CD4-positive, alpha-beta memory T cell (primary cell): ENCODE measurements at regions of chr20 and their contacts with region 1.

Region 1: DNA sequence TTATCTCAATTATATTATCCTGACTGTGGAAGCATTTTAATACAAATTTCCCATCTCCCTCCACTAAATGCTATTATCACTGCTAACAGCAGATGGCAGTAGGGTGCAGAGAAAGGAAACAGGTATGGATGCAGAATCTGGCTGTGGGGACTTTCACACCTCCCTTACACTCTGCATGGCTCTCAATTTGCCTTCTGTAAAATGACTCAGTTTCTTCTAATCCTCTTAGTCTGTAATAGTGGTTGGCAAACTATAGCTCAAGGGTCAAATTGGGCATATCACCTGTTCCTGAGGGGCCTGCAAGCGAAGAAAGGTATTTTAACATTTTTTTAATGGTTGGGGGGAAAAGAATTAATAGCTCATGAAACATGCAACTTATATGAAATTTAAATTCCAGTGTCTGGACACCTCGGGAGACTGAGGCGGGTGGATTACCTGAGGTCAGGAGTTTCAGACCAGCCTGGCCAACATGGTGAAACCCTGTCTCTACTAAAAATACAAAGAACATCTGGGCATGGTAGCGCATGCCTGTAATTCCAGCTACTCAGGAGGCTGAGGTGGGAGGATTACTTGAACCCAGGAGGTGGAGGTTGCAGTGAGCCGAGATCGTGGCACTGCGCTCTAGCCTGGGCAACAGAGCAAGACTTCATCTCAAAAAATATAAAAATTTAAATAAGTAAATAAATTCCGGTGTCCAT is 83.5 kb downstream of the ZMYND8 start:
- DNase-seq: peak; percentile 58 to 70 (median 63)
- H3K4me3 ChIP-seq: no peak overlapping the region
- H3K4me3 Mint-ChIP-seq: no peak overlapping the region
- H3K27ac ChIP-seq: no peak overlapping the region
- H3K27ac Mint-ChIP-seq: peak overlapping the region in 2 of 7 donors; percentile 33 to 51
- H3K4me1 ChIP-seq: no peaks in the 10 kb centered on the region
- H3K4me1 Mint-ChIP-seq: peaks cover 7 to 18% (median 13%) of the 10 kb centered on the region in 4 donors
- H3K27me3 ChIP-seq: no peaks in the 10 kb centered on the region
- H3K27me3 Mint-ChIP-seq: no peaks in the 10 kb centered on the region

Region 2: DNA sequence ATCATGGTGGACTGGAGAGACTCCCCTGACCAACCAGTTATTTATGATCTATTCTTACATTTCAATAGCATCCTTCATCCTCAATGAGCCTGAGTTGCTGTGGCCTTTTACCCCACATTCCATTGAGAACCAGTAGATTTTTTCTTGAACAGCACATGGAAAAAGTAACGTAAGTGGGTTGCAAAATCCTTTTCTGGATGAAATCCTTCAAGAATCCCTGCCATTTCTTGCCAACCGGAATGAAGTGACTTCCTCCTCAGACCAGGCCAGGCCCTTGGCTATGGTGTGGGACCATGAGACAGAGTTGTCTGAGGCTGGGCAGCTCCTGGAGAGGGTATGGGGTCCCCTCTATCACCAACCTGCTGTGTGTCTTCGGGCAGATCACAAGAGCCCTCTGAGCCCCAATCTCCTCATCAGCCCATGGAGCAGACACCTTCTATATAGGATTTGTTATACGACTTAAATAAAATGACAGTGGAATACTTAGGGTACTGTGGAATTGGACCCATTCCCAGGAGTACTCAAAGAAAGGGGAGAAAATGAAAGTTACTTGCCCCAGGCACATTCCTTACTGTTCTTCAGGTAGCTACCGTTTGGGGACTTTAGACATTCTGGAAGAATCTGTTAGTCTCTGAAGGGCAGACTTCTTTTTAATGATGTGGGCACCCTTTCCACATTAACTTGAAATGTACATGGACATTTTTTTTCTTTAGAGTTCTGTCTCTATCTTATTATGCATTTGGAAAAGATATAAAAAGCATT is 367.5 kb before region 1 on chr20:
- CTCF ChIA-PET with region 1: no interaction called
- POLR2A ChIA-PET with region 1: no interaction called
- intact Hi-C with region 1: no loop called
- DNase-seq: no peak
- H3K4me3 ChIP-seq: no peak overlapping the region
- H3K4me3 Mint-ChIP-seq: no peak overlapping the region
- H3K27ac ChIP-seq: no peak overlapping the region
- H3K27ac Mint-ChIP-seq: no peak overlapping the region
- H3K4me1 ChIP-seq: no peaks in the 10 kb centered on the region
- H3K4me1 Mint-ChIP-seq: no peaks in the 10 kb centered on the region
- H3K27me3 ChIP-seq: no peaks in the 10 kb centered on the region
- H3K27me3 Mint-ChIP-seq: peaks cover 7 to 16% of the 10 kb centered on the region in 2 donors

Region 3: DNA sequence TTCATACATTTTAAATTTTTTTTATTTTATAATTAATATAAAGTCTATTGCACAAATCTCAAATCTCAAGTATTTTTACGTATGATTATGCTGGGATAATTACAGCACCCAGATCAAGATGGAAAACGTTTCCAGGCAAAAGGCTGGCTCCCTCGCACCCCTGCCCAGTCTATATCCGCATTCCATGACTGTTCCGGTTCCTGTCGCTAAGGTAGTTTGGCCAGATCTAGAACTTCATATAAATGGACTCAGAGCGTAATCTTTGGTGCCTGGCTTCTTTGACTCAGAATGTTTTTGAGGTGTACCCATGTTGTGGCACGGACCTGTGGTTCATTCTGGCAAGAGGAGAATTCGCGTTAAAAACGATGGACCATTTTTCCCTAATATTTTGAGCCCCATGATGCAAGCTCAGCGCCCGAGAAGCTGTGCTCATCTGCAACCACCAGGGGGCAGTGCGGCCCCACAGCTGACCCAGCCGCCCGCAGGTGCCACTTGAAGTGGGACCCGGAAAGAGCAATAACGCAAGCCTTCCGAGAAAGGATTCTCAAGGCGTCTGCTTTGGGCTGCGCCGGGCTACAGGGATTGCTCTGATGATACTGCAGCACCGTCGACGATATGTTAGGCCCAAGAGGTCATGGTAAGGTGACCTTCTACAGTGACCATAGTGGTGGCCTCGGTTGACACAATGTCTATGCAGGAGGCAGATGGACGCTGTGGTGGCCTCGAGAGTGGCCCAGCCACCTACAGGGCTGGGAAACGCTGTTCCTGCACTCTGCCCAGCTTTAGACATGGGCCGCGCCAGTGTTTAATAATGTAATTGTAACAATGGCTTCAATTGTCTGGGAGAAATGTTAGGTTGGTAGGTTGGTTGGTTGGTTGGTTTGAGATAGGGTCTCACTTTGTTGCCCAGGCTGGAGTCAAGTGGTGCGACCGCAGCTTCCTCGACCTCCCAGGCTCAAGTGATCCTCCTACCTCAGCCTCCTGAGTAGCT is 76.7 kb before region 1 on chr20:
- CTCF ChIA-PET with region 1: interaction called, 34 read pairs
- POLR2A ChIA-PET with region 1: no interaction called
- intact Hi-C with region 1: loop called (anchors 1 kb)
- DNase-seq: peak; percentile 48 to 63 (median 61)
- H3K4me3 ChIP-seq: no peak overlapping the region
- H3K4me3 Mint-ChIP-seq: no peak overlapping the region
- H3K27ac ChIP-seq: no peak overlapping the region
- H3K27ac Mint-ChIP-seq: peak overlapping the region in 1 of 7 donors; percentile 29
- H3K4me1 ChIP-seq: no peaks in the 10 kb centered on the region
- H3K4me1 Mint-ChIP-seq: peaks cover 0 to 7% (median 0%) of the 10 kb centered on the region in 4 donors
- H3K27me3 ChIP-seq: no peaks in the 10 kb centered on the region
- H3K27me3 Mint-ChIP-seq: no peaks in the 10 kb centered on the region

Region 4: GRCh38 chr20:47284373-47284772 is 11.3 kb after region 1 on chr20:
- CTCF ChIA-PET with region 1: interaction called, 33 read pairs
- POLR2A ChIA-PET with region 1: no interaction called
- intact Hi-C with region 1: no loop called
- DNase-seq: no peak
- H3K4me3 ChIP-seq: no peak overlapping the region
- H3K4me3 Mint-ChIP-seq: no peak overlapping the region
- H3K27ac ChIP-seq: no peak overlapping the region
- H3K27ac Mint-ChIP-seq: peak overlapping the region in 2 of 7 donors; percentile 57 to 76
- H3K4me1 ChIP-seq: no peaks in the 10 kb centered on the region
- H3K4me1 Mint-ChIP-seq: peaks cover 0 to 1% (median 0%) of the 10 kb centered on the region in 4 donors
- H3K27me3 ChIP-seq: no peaks in the 10 kb centered on the region
- H3K27me3 Mint-ChIP-seq: no peaks in the 10 kb centered on the region

Region 5: GRCh38 chr20:47356526-47357295 is 83.7 kb after region 1 on chr20 and contains the start of gene ZMYND8:
- CTCF ChIA-PET with region 1: interaction called, 34 read pairs
- POLR2A ChIA-PET with region 1: interaction called, 4 read pairs
- intact Hi-C with region 1: no loop called
- DNase-seq: peak; percentile 92 to 100 (median 97)
- H3K4me3 ChIP-seq: peak within 1 kb of the TSS; percentile 39 to 59
- H3K4me3 Mint-ChIP-seq: peak within 1 kb of the TSS; percentile 91 to 98 (median 96)
- H3K27ac ChIP-seq: peak within 1 kb of the TSS; percentile 76
- H3K27ac Mint-ChIP-seq: peak within 1 kb of the TSS; percentile 92 to 100 (median 99)
- H3K4me1 ChIP-seq: peaks cover 70% of the 10 kb centered on the region
- H3K4me1 Mint-ChIP-seq: peaks cover 13 to 55% (median 30%) of the 10 kb centered on the region in 4 donors
- H3K27me3 ChIP-seq: no peaks in the 10 kb centered on the region
- H3K27me3 Mint-ChIP-seq: no peaks in the 10 kb centered on the region
- total RNA-seq, gene ZMYND8: 47.7 to 48.5 TPM

Region 6: GRCh38 chr20:47610247-47610944 is 337.4 kb after region 1 on chr20:
- CTCF ChIA-PET with region 1: interaction called, 14 read pairs
- POLR2A ChIA-PET with region 1: no interaction called
- intact Hi-C with region 1: no loop called
- DNase-seq: peak; percentile 30 to 93 (median 44)
- H3K4me3 ChIP-seq: no peak overlapping the region
- H3K4me3 Mint-ChIP-seq: peak overlapping the region in 7 of 8 donors; percentile 18 to 85 (median 61)
- H3K27ac ChIP-seq: peak overlapping the region; percentile 33
- H3K27ac Mint-ChIP-seq: peak overlapping the region; percentile 77 to 97 (median 94)
- H3K4me1 ChIP-seq: peaks cover 65% of the 10 kb centered on the region
- H3K4me1 Mint-ChIP-seq: peaks cover 53 to 77% (median 66%) of the 10 kb centered on the region in 4 donors
- H3K27me3 ChIP-seq: no peaks in the 10 kb centered on the region
- H3K27me3 Mint-ChIP-seq: no peaks in the 10 kb centered on the region